CD8-positive, alpha-beta memory T cell (primary cell): ENCODE measurements at regions of chr4 and their contacts with region 1.

Region 1: DNA sequence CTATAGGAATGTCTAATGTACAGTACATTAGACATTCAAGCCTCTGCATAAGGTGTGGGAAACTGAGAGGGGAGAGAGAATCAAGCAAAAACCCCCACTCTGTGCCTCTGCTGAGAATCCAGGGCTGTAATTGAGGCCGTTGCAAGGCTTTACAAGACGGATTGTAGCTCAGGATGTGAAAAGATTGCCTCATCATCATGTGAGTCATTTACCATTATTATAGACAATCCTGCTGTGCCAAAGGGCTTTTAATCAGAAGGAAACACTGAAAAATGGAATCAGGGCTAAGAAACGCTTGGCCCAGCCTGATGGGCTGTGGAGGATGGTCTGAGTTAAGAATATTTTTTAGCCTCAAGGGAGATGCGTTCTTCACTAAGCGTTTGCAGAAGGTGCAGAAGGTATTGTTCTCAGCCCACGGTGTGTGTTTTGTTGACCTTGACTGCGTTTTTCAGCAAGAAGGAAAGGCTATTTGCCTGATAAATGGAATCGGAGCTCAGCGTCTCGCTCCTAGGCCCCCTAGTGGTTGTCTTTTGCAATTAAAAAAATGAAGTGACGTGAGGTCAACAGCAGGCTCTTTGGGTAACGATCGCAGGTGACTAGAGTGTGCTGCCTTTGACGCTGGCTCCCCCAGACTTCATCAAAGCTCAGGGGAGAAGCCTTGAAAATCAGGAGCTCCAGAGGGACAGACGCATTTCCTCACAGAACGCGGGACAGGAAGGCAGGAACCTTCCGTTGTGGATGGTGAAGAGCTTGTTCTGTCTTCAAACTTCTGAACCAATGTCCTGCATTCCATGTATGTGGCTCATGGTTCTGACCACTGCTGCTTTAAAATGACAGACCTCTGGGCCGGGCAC is 18.1 kb upstream of the CHRNA9 start:
- DNase-seq: peak; percentile 37 to 79 (median 70)
- H3K4me3 ChIP-seq: peak overlapping the region; percentile 73
- H3K4me3 Mint-ChIP-seq: peak overlapping the region; percentile 58 to 86 (median 79)
- H3K27ac ChIP-seq: peak overlapping the region; percentile 77
- H3K27ac Mint-ChIP-seq: peak overlapping the region; percentile 69 to 97 (median 94)
- H3K4me1 ChIP-seq: peaks cover 28% of the 10 kb centered on the region
- H3K4me1 Mint-ChIP-seq: peaks cover 22 to 40% (median 22%) of the 10 kb centered on the region in 3 donors
- H3K27me3 ChIP-seq: no peaks in the 10 kb centered on the region
- H3K27me3 Mint-ChIP-seq: no peaks in the 10 kb centered on the region

Region 2: DNA sequence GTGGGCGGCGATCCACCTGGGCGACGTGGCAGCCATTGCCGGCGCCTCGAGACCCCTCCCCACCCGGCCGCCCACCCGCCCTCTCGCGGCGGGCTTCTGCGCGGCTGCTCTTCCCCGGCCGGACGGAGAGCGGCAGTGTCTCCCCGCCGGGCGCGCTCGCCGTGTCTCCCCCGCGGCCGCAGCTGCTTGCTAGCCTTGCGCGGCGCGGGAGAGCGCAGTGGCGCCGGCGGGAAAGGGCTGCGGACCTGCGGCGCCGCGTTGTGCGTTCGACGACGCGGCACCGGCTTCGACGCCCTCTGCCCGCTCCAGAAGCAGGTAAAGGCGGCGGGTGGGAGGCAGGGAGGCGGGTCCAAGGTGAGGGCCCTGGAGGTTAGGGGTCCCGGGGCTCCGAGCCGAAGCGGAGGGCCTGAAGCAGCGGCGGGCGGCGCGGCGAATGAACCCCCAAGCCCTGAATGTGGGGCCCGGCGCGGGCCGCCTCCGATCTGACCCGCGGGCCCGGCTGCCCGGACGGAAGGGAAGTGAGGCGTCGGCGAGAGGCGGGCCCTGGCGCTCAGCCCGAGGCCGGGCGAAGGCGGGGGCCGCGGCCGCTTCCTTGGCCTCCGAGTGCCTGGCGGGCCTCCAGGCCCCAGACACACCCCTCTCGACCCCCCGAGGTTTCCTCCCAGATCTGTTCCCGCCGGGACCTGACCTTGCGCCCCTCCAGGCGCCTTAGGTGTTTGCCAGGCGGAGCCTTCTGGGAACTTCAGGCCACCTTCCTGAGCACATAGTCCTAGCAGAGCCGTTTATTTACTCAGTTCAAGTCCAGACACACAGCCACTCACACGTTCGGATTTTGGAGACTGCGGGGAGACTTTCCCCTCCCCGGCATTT is 260.1 kb before region 1 on chr4 and contains the start of gene N4BP2:
- CTCF ChIA-PET with region 1: interaction called, 21 read pairs
- POLR2A ChIA-PET with region 1: interaction called, 3 read pairs
- DNase-seq: peak; percentile 53 to 82 (median 69)
- H3K4me3 ChIP-seq: peak within 1 kb of the TSS; percentile 96
- H3K4me3 Mint-ChIP-seq: peak within 1 kb of the TSS; percentile 89 to 98 (median 95)
- H3K27ac ChIP-seq: peak within 1 kb of the TSS; percentile 83
- H3K27ac Mint-ChIP-seq: peak within 1 kb of the TSS; percentile 91 to 99 (median 96)
- H3K4me1 ChIP-seq: peaks cover 21% of the 10 kb centered on the region
- H3K4me1 Mint-ChIP-seq: peaks cover 27 to 39% (median 32%) of the 10 kb centered on the region in 3 donors
- H3K27me3 ChIP-seq: no peaks in the 10 kb centered on the region
- H3K27me3 Mint-ChIP-seq: no peaks in the 10 kb centered on the region
- total RNA-seq, gene N4BP2: 18.0 to 21.1 TPM

Region 3: GRCh38 chr4:40199999-40200874 is 116.8 kb before region 1 on chr4:
- CTCF ChIA-PET with region 1: interaction called, 23 read pairs
- POLR2A ChIA-PET with region 1: interaction called, 4 read pairs
- DNase-seq: peak; percentile 38 to 81 (median 63)
- H3K4me3 ChIP-seq: peak overlapping the region; percentile 93
- H3K4me3 Mint-ChIP-seq: peak overlapping the region; percentile 93 to 100 (median 97)
- H3K27ac ChIP-seq: peak overlapping the region; percentile 96
- H3K27ac Mint-ChIP-seq: peak overlapping the region; percentile 94 to 100 (median 99)
- H3K4me1 ChIP-seq: peaks cover 38% of the 10 kb centered on the region
- H3K4me1 Mint-ChIP-seq: peaks cover 47 to 70% (median 58%) of the 10 kb centered on the region in 3 donors
- H3K27me3 ChIP-seq: no peaks in the 10 kb centered on the region
- H3K27me3 Mint-ChIP-seq: peaks cover 0 to 1% of the 10 kb centered on the region in 2 donors

Region 4: GRCh38 chr4:40228497-40229365 is 88.3 kb before region 1 on chr4:
- CTCF ChIA-PET with region 1: interaction called, 120 read pairs
- POLR2A ChIA-PET with region 1: interaction called, 7 read pairs
- DNase-seq: no peak
- H3K4me3 ChIP-seq: peak overlapping the region; percentile 42
- H3K4me3 Mint-ChIP-seq: peak overlapping the region; percentile 78 to 88 (median 83)
- H3K27ac ChIP-seq: no peak overlapping the region
- H3K27ac Mint-ChIP-seq: peak overlapping the region; percentile 91 to 98 (median 95)
- H3K4me1 ChIP-seq: peaks cover 96% of the 10 kb centered on the region
- H3K4me1 Mint-ChIP-seq: peaks cover 83 to 100% (median 97%) of the 10 kb centered on the region in 3 donors
- H3K27me3 ChIP-seq: no peaks in the 10 kb centered on the region
- H3K27me3 Mint-ChIP-seq: peaks cover 0 to 1% of the 10 kb centered on the region in 2 donors

Region 5: DNA sequence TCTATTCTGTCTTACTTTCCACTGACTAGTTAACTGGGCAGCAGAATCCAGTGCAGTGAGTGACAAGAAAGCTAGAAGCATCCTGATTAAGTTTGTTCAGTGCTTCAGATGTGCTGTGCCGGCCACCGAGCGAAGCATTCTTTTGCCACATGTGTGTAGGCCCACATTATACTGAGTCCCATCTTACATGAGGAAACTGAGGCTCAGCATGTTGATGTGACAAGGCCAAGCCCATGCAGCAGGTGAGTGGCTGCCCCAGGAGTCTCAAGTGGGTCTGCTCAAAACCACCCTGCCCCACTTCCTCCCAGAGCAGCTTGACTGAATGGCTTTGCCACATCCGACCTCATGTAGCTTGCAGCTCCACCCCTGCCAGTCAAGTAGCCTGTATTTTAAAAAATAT is 69.7 kb before region 1 on chr4:
- CTCF ChIA-PET with region 1: interaction called, 11 read pairs
- POLR2A ChIA-PET with region 1: no interaction called
- DNase-seq: peak in 4 of 5 donors; percentile 41 to 87 (median 56)
- H3K4me3 ChIP-seq: no peak overlapping the region
- H3K4me3 Mint-ChIP-seq: peak overlapping the region; percentile 3 to 82 (median 67)
- H3K27ac ChIP-seq: no peak overlapping the region
- H3K27ac Mint-ChIP-seq: peak overlapping the region; percentile 40 to 97 (median 96)
- H3K4me1 ChIP-seq: peaks cover 81% of the 10 kb centered on the region
- H3K4me1 Mint-ChIP-seq: peaks cover 65 to 91% (median 80%) of the 10 kb centered on the region in 3 donors
- H3K27me3 ChIP-seq: no peaks in the 10 kb centered on the region
- H3K27me3 Mint-ChIP-seq: no peaks in the 10 kb centered on the region

Region 6: DNA sequence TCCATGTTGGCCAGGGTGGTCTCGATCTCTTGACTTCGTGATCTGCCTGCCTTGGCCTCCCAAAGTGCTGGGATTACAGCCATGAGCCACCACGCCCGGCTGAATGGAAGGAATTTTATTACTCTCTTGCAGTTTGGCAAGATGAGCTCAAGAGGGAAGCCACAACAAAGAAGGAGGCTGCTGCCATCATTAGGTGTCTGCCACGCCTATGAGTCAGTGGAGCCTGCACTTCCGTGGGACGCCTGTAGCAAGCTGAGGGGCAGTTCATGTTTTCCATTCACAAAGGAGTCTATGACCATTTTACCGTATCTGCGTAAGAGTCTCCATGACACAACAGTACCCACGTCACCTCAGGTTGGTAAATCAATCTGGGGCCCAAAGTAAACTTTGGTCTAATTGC is 33.0 kb before region 1 on chr4:
- CTCF ChIA-PET with region 1: interaction called, 111 read pairs
- POLR2A ChIA-PET with region 1: interaction called, 6 read pairs
- DNase-seq: peak; percentile 58 to 93 (median 78)
- H3K4me3 ChIP-seq: no peak overlapping the region
- H3K4me3 Mint-ChIP-seq: peak overlapping the region in 6 of 7 donors; percentile 64 to 89 (median 72)
- H3K27ac ChIP-seq: no peak overlapping the region
- H3K27ac Mint-ChIP-seq: peak overlapping the region; percentile 88 to 98 (median 94)
- H3K4me1 ChIP-seq: peaks cover 55% of the 10 kb centered on the region
- H3K4me1 Mint-ChIP-seq: peaks cover 48 to 77% (median 58%) of the 10 kb centered on the region in 3 donors
- H3K27me3 ChIP-seq: no peaks in the 10 kb centered on the region
- H3K27me3 Mint-ChIP-seq: no peaks in the 10 kb centered on the region

Region 7: GRCh38 chr4:40388239-40388985 is 71.4 kb after region 1 on chr4:
- CTCF ChIA-PET with region 1: no interaction called
- POLR2A ChIA-PET with region 1: no interaction called
- DNase-seq: no peak
- H3K4me3 ChIP-seq: no peak overlapping the region
- H3K4me3 Mint-ChIP-seq: no peak overlapping the region
- H3K27ac ChIP-seq: no peak overlapping the region
- H3K27ac Mint-ChIP-seq: peak overlapping the region in 2 of 8 donors; percentile 1 to 69
- H3K4me1 ChIP-seq: no peaks in the 10 kb centered on the region
- H3K4me1 Mint-ChIP-seq: no peaks in the 10 kb centered on the region
- H3K27me3 ChIP-seq: no peaks in the 10 kb centered on the region
- H3K27me3 Mint-ChIP-seq: peaks cover 0 to under 1% of the 10 kb centered on the region in 2 donors

Region 8: GRCh38 chr4:40525811-40526598 is 209.0 kb after region 1 on chr4:
- CTCF ChIA-PET with region 1: no interaction called
- POLR2A ChIA-PET with region 1: no interaction called
- DNase-seq: no peak
- H3K4me3 ChIP-seq: no peak overlapping the region
- H3K4me3 Mint-ChIP-seq: no peak overlapping the region
- H3K27ac ChIP-seq: peak overlapping the region; percentile 62
- H3K27ac Mint-ChIP-seq: no peak overlapping the region
- H3K4me1 ChIP-seq: no peaks in the 10 kb centered on the region
- H3K4me1 Mint-ChIP-seq: no peaks in the 10 kb centered on the region
- H3K27me3 ChIP-seq: no peaks in the 10 kb centered on the region
- H3K27me3 Mint-ChIP-seq: no peaks in the 10 kb centered on the region